Heart left ventricle (tissue), 16 donors: ENCODE measurements at regions of chr14 and their contacts with region 1.

Region 1: DNA sequence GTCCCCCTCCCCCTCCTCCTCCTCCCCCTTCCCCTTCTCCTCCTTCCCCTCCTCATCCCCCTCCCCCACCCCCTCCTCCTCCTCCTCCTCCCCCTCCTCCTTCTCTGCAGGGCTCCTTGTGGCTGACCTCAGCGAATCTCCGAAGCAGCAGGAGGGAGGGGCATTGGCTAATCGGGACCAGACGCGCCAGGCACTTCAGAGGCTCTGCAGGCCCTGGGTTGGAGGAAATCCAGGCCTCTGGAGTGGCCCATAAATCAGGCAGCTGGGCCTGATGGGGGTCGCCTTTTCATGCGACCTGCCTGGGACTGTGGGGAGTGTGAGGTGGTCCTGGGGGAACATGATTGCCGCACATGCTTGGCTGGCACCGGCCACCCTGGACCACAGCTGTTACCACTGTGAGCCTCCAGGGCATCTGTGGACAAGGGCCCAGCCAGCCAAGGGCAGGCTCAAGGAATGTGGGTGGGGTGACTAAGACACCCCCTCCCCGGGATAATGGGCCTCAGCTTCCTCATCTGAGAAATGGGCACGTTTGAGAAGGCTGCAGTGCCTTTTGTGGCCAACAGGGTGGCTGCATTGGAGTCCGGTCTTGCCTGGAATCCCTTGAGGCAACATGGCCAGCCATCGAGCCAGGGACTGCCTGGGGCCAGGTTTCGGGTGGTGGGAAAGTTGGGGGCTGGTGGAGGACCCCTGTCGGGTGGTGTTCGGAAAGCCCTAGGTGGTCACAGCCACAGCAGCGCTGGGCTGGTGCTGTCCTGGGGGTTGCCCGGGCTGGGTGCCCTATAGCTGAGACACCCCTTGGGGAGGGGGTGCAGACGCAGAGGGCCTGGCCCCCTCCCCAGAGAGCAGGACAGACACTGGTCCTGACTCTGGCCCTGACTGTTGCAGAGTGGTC is 12.0 kb downstream of the KIF26A start:
- DNase-seq: peak in 1 of 5 donors; percentile 59
- ATAC-seq: peak in 1 of 4 donors; percentile 40
- H3K4me3 ChIP-seq: no peak overlapping the region
- H3K27ac ChIP-seq: peak overlapping the region in 2 of 12 donors; percentile 32 to 52
- H3K4me1 ChIP-seq: peaks cover 0 to 55% (median 18%) of the 10 kb centered on the region in 12 donors
- H3K27me3 ChIP-seq: no peaks in the 10 kb centered on the region
- CTCF ChIP-seq: peak in 3 of 12 donors; percentile 10 to 29 (median 14)
- POLR2A ChIP-seq: no peak

Region 2: DNA sequence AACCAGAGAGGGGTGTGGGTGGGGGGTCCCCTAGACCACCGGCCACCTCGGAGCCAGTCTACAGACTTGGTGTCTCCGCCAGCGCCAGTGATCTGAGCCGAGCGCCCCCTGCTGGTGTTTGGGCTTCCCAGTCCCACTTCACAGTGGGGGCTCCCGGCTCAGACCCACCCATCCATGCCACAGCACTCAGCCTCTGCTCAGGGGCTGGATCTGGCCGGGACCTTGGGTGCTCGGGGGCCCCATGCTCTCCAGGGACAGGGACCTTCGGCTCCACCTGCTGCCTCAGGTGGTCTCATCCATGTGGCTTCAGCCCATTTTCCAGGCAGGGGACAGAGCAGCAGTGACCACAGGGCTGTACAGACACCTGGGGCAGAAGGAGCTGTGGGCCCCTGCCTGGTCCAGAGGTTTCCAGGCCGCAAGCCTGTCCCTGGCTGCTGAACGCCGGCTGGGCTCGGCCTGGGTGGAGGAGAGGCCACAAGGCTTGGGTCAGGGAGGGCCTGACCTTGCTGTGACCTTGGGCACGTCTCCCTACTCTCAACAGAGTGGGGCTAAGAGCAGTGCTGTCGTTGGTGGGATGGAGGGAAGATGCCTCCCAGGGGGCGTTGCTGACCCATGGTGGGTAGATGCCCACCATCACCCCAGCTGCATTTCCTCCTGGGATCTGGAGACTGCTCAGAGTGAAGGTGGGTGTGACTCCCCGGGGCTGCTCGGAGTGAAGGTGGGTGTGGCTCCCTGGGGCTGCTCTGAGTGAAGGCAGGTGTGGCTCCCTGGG is 74.3 kb after region 1 on chr14:
- intact Hi-C with region 1: loop called in 1 of 10 experiments (anchors 10 kb)
- DNase-seq: peak in 2 of 5 donors; percentile 28 to 74
- ATAC-seq: no peak
- H3K4me3 ChIP-seq: peak overlapping the region in 1 of 12 donors; percentile 45
- H3K27ac ChIP-seq: no peak overlapping the region
- H3K4me1 ChIP-seq: peaks cover 0 to 30% (median 6%) of the 10 kb centered on the region in 12 donors
- H3K27me3 ChIP-seq: peaks cover 0 to 27% (median 7%) of the 10 kb centered on the region in 9 donors
- CTCF ChIP-seq: peak; percentile 33 to 66 (median 54)
- POLR2A ChIP-seq: no peak

Region 3: GRCh38 chr14:104277416-104278213 is 127.2 kb after region 1 on chr14:
- intact Hi-C with region 1: loop called in 1 of 10 experiments (anchors 10 kb)
- DNase-seq: peak in 3 of 5 donors; percentile 4 to 28 (median 4)
- ATAC-seq: no peak
- H3K4me3 ChIP-seq: no peak overlapping the region
- H3K27ac ChIP-seq: no peak overlapping the region
- H3K4me1 ChIP-seq: peaks cover 0 to 3% (median 0%) of the 10 kb centered on the region in 12 donors
- H3K27me3 ChIP-seq: peaks cover 0 to 5% (median 0%) of the 10 kb centered on the region in 9 donors
- CTCF ChIP-seq: no peak
- POLR2A ChIP-seq: no peak

Region 4: DNA sequence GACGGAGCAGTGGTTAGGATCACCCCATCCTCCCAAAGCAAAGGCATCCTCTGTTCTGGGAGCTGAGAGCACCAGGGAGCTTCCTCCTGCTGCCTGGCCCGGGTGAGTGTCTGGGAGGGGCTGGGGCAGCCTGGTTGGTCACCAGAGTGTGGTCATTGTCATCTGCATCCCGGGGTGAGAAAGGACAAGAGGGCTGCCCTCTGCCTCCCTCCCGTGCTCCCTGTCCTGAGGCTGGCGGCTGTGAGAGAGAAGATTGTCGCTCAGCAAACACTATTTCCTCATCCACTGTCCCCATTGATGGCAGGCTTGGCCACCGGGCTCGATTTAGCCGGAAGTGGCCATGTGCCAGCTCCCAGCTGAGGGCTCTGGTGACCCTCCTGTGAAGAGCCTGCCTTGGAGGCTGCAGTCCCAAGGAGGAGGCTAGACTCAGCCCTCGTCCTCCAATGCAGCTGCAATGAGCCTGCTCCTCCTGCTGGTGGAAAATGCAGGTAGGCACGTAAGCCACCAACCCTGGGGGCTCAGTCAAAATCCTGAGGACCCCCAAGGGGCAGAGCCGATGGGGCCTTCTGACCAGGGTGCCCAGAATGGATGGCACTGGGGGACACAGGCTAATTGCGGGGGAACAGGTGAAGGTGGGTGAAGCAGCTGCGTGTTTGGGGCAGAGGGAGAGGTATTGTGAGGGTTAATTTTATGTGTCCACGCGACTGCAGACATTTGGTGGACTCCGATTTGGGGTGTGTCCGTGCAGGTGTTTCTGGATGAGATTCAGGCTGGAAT is 143.7 kb after region 1 on chr14:
- intact Hi-C with region 1: loop called in 1 of 10 experiments (anchors 10 kb)
- DNase-seq: peak in 3 of 5 donors; percentile 14 to 57 (median 15)
- ATAC-seq: no peak
- H3K4me3 ChIP-seq: no peak overlapping the region
- H3K27ac ChIP-seq: no peak overlapping the region
- H3K4me1 ChIP-seq: no peaks in the 10 kb centered on the region
- H3K27me3 ChIP-seq: peaks cover 0 to 40% (median 16%) of the 10 kb centered on the region in 9 donors
- CTCF ChIP-seq: peak in 6 of 12 donors; percentile 9 to 28 (median 14)
- POLR2A ChIP-seq: no peak

Region 5: GRCh38 chr14:104361101-104361591 is 210.8 kb after region 1 on chr14:
- intact Hi-C with region 1: loop called in 1 of 10 experiments (anchors 10 kb)
- DNase-seq: peak in 2 of 5 donors; percentile 5 to 47
- ATAC-seq: no peak
- H3K4me3 ChIP-seq: no peak overlapping the region
- H3K27ac ChIP-seq: no peak overlapping the region
- H3K4me1 ChIP-seq: peaks cover 0 to 2% (median 0%) of the 10 kb centered on the region in 12 donors
- H3K27me3 ChIP-seq: peaks cover 0 to 5% (median 0%) of the 10 kb centered on the region in 9 donors
- CTCF ChIP-seq: no peak
- POLR2A ChIP-seq: no peak